PC-9 (cell line): ENCODE measurements at regions of chr20 and their contacts with region 1.

Region 1: GRCh38 chr20:35303735-35304491 is 11.7 kb upstream of the FAM83C start:
- DNase-seq: peak; percentile 79 to 90
- H3K4me3 ChIP-seq: no peak overlapping the region
- H3K27ac ChIP-seq: peak overlapping the region; percentile 92
- H3K4me1 ChIP-seq: peaks cover 73% of the 10 kb centered on the region
- H3K27me3 ChIP-seq: no peaks in the 10 kb centered on the region
- CTCF ChIP-seq: peak; percentile 95

Region 2: GRCh38 chr20:35269055-35269781 is 34.7 kb before region 1 on chr20:
- CTCF ChIA-PET with region 1: interaction called, 18 read pairs
- POLR2A ChIA-PET with region 1: interaction called, 4 read pairs
- intact Hi-C with region 1: no loop called
- DNase-seq: peak in 1 of 2 experiments; percentile 66
- H3K4me3 ChIP-seq: no peak overlapping the region
- H3K27ac ChIP-seq: no peak overlapping the region
- H3K4me1 ChIP-seq: peaks cover under 1% of the 10 kb centered on the region
- H3K27me3 ChIP-seq: no peaks in the 10 kb centered on the region
- CTCF ChIP-seq: peak; percentile 84

Region 3: DNA sequence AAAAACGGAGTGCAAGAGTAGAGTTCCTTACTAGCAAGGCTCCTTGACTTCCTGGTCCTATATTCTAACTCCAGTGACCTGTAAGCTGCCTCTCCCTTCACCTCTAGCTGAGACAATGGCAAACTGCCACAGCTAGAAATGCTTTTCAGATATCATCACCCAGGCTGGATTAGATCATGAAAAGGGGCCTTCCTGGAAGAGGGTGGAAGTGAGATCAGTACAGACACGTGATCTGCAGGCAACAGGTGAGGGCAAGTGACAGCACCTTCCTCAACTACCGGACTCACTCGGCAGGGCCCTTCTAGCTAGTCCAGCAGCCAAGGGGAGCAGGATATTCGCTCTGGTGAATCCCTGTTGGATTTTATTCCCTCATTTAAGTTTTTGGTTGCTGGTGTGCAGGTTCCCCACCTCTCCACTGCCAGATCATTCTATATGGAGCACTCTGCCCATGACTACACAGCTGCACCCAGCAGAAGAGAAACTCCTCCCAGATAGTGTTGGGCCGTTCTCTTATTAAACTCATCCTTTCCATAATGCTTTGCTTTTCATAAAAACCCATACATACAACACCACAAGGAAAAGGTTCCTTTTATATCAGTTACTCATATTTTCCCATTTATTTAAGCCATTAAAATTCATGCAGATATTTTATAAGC is 14.7 kb after region 1 on chr20:
- CTCF ChIA-PET with region 1: interaction called, 19 read pairs
- POLR2A ChIA-PET with region 1: interaction called, 12 read pairs
- intact Hi-C with region 1: loop called (anchors 1 kb)
- DNase-seq: peak; percentile 89 to 99
- H3K4me3 ChIP-seq: no peak overlapping the region
- H3K27ac ChIP-seq: peak overlapping the region; percentile 74
- H3K4me1 ChIP-seq: peaks cover 61% of the 10 kb centered on the region
- H3K27me3 ChIP-seq: no peaks in the 10 kb centered on the region
- CTCF ChIP-seq: no peak

Region 4: GRCh38 chr20:35339007-35339406 is 35.1 kb after region 1 on chr20:
- CTCF ChIA-PET with region 1: no interaction called
- POLR2A ChIA-PET with region 1: no interaction called
- intact Hi-C with region 1: loop called (anchors 2 kb)
- DNase-seq: peak; percentile 17 to 75
- H3K4me3 ChIP-seq: no peak overlapping the region
- H3K27ac ChIP-seq: no peak overlapping the region
- H3K4me1 ChIP-seq: peaks cover 20% of the 10 kb centered on the region
- H3K27me3 ChIP-seq: no peaks in the 10 kb centered on the region
- CTCF ChIP-seq: no peak

Region 5: DNA sequence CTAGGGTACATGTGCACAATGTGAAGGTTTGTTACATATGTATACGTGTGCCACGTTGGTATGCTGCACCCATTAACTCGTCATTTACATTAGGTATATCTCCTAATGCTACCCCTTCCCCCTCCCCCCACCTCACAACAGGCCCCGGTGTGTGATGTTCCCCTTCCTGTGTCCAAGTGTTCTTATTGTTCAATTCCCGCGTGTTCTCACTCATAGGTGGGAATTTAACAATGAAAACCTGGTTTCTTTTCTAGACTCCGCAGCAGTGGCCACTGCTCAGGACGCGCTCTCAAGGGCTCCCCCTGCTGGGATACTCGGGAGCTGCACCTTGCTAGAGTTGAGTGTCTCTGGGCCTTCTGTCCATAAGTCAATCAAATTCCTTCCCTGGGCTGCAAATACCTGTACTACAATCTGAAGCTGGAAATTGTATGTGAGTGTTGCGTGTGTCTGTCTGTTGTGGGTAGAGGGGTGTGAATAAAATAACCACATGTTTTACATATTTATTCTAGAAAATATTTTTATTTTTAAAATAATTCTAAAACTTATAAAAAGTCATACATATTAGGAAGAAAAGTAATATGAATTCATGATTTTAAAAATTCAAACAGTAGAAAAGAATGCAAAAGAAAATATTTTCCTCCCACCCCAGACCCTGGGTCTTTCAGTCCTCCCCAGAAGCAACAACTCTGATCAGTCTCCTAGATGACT is 143.3 kb after region 1 on chr20:
- CTCF ChIA-PET with region 1: interaction called, 14 read pairs
- POLR2A ChIA-PET with region 1: no interaction called
- intact Hi-C with region 1: loop called (anchors 2 kb)
- DNase-seq: peak; percentile 59 to 91
- H3K4me3 ChIP-seq: no peak overlapping the region
- H3K27ac ChIP-seq: no peak overlapping the region
- H3K4me1 ChIP-seq: no peaks in the 10 kb centered on the region
- H3K27me3 ChIP-seq: no peaks in the 10 kb centered on the region
- CTCF ChIP-seq: peak; percentile 96